Left colon (tissue), 2 donors: ENCODE measurements at regions of chr2 and their contacts with region 1.

Region 1: DNA sequence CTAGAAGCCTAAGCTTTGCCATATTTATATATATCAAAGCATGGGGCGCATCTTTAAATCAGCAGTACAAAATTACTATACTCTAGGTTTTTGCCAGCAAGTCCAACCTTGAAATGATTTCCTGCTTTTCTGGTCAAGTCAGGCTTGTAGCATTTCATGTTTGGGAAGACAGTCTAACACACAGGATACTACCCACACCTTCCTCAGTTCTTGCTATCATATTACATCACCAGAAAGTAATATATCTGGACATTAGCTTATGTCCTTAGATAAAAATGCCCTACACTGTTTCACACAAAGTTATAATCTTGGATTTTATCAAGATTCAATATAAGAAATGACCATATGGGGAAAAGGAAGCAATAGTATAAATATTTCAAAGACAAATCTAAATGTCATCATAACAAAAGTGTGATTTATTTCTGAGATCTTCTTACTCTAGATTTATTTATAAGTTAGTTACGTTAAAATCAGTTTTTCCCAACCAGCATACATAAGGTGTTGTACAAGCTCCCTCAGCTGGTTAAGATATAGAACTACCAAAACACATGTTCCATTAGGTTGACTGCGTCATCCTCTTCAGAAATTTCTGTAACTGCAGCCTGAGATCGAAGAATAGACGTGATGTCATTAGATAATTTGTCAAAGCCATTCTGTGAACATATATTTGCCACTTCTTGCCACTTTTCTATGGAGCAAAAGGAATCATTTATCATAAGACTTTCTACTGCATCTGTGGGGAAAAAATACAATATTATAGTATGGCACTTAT is 56.7 kb downstream of the CLHC1 start:
- DNase-seq: no peak
- ATAC-seq: peak; percentile 83

Region 2: DNA sequence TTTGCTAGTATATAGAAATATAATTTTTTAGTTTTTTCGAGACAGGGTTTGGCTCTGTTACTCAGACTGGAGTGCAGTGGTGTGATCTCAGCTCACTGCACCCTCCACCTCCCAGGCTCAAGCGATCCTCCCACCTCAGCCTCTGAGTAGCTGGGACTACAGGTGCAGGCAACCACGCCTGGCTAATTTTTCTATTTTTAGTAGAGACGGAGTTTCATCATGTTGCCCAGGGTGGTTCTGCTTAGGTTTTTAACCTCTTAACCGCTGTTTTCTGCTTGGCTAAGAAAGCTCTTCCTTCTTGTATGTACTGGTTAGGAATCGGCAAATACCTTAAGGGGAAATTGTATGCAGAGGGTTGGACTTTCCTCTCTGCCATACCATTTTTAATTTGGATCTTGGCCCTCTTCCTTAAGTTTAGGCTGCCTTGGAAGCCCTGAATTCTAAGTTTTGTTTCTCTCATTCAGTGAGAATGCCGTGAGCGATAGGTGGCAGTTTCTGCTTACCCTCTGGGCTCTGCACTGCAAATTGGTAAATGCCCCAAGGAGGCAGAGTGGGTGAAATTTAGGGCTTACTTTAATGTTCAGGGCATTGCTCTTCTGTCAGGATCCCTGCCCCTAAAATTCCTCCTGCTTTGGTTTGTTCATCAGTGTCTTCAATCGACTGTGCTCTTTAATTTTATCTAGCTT is 419.7 kb before region 1 on chr2:
- intact Hi-C with region 1: no loop called
- DNase-seq: no peak
- ATAC-seq: no peak

Region 3: GRCh38 chr2:54899576-54900200 is 275.8 kb before region 1 on chr2:
- intact Hi-C with region 1: loop called in 1 of 2 experiments (anchors 10 kb)
- DNase-seq: no peak
- ATAC-seq: peak; percentile 54

Region 4: DNA sequence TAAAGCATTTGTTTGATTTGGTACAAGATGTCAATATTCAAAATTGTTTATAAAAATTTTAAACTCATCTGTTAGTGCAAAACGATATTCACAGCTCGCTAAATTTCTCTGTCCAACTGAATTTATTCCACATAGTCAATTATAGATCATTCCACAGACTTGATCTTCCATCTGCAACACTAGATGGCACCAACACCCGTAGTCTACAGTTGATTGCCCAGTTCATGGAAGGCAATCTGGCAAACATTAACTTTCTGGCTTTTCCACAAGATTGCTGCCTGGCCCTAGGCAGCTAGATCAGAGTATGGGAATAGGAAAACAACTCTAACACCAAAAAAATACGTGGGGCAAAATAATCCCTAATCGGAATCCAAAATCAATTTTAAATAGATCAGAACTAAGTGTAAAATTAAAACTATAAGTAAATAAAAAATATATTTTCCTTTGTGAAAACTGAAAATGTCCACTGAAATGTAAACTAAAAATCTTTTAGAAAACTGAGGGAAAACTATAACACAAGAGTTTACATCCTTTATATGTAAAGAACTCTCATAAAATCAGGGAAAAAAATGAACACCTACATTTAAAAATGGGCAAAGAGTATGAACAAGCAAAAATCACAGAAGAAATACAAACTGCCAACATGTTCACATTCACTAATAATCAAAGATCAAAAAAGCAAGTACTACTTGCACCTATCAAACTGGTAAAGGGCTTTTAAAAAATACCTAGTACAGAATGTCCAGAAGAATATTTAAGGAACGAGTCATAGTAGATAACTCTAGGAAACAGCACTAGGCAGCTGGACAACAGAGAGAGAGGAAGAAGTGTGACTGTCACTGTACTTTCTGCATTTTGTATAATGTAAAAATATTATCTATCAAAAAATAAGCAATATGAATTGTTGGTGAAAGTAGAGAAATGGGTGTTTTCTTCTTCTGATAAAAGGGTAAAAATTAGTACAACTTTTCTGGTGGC is 160.2 kb before region 1 on chr2:
- intact Hi-C with region 1: loop called in 1 of 2 experiments (anchors 5 kb)
- DNase-seq: peak; percentile 43 to 60
- ATAC-seq: peak; percentile 81